Activated T-helper 1 cell treated with anti-CD3 and anti-CD28 coated beads, Interleukin-12 subunit alpha, Interleukin-12 subunit beta, Interleukin-2, Interleukin-4 antibody, amounts not matched to agents 30 ng/mL and 10 ng/mL and 1 ng/mL, durations not matched to agents 14 hours and 24 hours and 36 hours (primary cell): ENCODE measurements at regions of chr11 and their contacts with region 1.

Region 1: GRCh38 chr11:66842896-66843775 is at the start of gene RCE1:
- DNase-seq: peak; percentile 90
- H3K4me3 Mint-ChIP-seq: peak within 1 kb of the TSS; percentile 90
- H3K27ac Mint-ChIP-seq: peak within 1 kb of the TSS; percentile 96
- H3K4me1 Mint-ChIP-seq: peaks cover 32% of the 10 kb centered on the region
- H3K27me3 Mint-ChIP-seq: no peaks in the 10 kb centered on the region
- total RNA-seq, gene RCE1: 30.9 and 34.4 TPM in 2 replicates

Region 2: DNA sequence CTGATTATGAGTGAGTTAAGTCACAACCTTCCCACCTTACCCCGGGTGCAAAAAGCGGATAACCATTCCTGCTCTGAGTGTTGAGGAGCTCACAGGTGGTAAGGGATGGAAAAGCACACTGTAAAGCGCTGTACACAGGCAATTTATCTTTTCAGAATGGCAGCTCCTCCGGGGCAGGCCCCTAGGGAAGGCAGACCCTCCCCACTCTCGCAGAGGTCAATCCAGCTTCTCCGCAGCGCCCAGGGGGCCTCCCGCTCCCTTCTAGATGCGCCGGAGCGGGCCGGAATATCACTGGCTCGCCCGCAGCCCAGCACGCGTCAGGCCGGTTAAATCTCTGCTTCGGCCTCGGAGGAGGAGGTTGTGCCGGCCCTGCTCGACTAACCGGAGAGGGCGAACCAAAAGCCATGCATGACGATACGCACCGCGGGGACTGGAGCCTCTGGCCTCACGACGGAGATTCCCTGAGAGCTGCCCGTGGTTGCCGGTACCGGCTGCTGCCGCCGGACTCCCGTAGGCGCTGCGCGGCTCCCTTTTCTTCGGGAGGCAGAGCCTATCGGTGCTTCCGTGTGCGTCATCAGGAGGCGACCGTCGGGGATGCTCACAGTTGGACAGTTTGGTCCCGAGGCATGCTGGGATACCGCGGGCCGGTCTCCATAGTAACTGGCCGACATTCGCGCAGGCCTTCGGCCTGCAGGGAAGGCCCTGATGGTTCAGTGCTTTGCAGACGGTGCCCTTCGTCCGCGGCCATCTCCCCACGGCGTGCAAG is 498.4 kb before region 1 on chr11 and contains the start of gene BRMS1:
- intact Hi-C with region 1: loop called (anchors 2 kb)
- DNase-seq: peak; percentile 94
- H3K4me3 Mint-ChIP-seq: peak within 1 kb of the TSS; percentile 97
- H3K27ac Mint-ChIP-seq: peak within 1 kb of the TSS; percentile 95
- H3K4me1 Mint-ChIP-seq: peaks cover 46% of the 10 kb centered on the region
- H3K27me3 Mint-ChIP-seq: peaks cover 2% of the 10 kb centered on the region
- total RNA-seq, gene BRMS1: 63.1 and 67.1 TPM in 2 replicates

Region 3: GRCh38 chr11:66480117-66480938 is 362.8 kb before region 1 on chr11 and contains the start of gene DPP3:
- intact Hi-C with region 1: loop called (anchors 2 kb)
- DNase-seq: peak; percentile 96
- H3K4me3 Mint-ChIP-seq: peak within 1 kb of the TSS; percentile 89
- H3K27ac Mint-ChIP-seq: peak within 1 kb of the TSS; percentile 82
- H3K4me1 Mint-ChIP-seq: peaks cover 44% of the 10 kb centered on the region
- H3K27me3 Mint-ChIP-seq: no peaks in the 10 kb centered on the region
- total RNA-seq, gene DPP3: 102 and 112 TPM in 2 replicates

Region 4: GRCh38 chr11:66638177-66639065 is 204.7 kb before region 1 on chr11 and contains the start of gene RBM4:
- intact Hi-C with region 1: loop called (anchors 2 kb)
- DNase-seq: peak; percentile 97
- H3K4me3 Mint-ChIP-seq: peak within 1 kb of the TSS; percentile 96
- H3K27ac Mint-ChIP-seq: peak within 1 kb of the TSS; percentile 96
- H3K4me1 Mint-ChIP-seq: peaks cover 68% of the 10 kb centered on the region
- H3K27me3 Mint-ChIP-seq: no peaks in the 10 kb centered on the region
- total RNA-seq, gene RBM4: 131 and 133 TPM in 2 replicates

Region 5: GRCh38 chr11:66855574-66856495 is 12.7 kb after region 1 on chr11:
- intact Hi-C with region 1: loop called (anchors 1 kb)
- DNase-seq: peak; percentile 88
- H3K4me3 Mint-ChIP-seq: peak overlapping the region; percentile 94
- H3K27ac Mint-ChIP-seq: peak overlapping the region; percentile 97
- H3K4me1 Mint-ChIP-seq: peaks cover 14% of the 10 kb centered on the region
- H3K27me3 Mint-ChIP-seq: no peaks in the 10 kb centered on the region

Region 6: GRCh38 chr11:66958232-66958955 is 115.3 kb after region 1 on chr11 and contains the start of gene PC:
- intact Hi-C with region 1: loop called (anchors 1 kb)
- DNase-seq: peak; percentile 97
- H3K4me3 Mint-ChIP-seq: peak within 1 kb of the TSS; percentile 83
- H3K27ac Mint-ChIP-seq: peak within 1 kb of the TSS; percentile 90
- H3K4me1 Mint-ChIP-seq: peaks cover 29% of the 10 kb centered on the region
- H3K27me3 Mint-ChIP-seq: peaks cover 16% of the 10 kb centered on the region
- total RNA-seq, gene PC: 11.2 and 15.9 TPM in 2 replicates

Region 7: GRCh38 chr11:67045341-67045764 is 202.2 kb after region 1 on chr11:
- intact Hi-C with region 1: no loop called
- DNase-seq: no peak
- H3K4me3 Mint-ChIP-seq: no peak overlapping the region
- H3K27ac Mint-ChIP-seq: no peak overlapping the region
- H3K4me1 Mint-ChIP-seq: no peaks in the 10 kb centered on the region
- H3K27me3 Mint-ChIP-seq: peaks cover 7% of the 10 kb centered on the region